HEK293T (cell line): ENCODE measurements at regions of chr5 and their contacts with region 1.

Region 1: GRCh38 chr5:147188200-147189108 is 46.4 kb upstream of the STK32A start:
- DNase-seq: peak; percentile 63

Region 2: DNA sequence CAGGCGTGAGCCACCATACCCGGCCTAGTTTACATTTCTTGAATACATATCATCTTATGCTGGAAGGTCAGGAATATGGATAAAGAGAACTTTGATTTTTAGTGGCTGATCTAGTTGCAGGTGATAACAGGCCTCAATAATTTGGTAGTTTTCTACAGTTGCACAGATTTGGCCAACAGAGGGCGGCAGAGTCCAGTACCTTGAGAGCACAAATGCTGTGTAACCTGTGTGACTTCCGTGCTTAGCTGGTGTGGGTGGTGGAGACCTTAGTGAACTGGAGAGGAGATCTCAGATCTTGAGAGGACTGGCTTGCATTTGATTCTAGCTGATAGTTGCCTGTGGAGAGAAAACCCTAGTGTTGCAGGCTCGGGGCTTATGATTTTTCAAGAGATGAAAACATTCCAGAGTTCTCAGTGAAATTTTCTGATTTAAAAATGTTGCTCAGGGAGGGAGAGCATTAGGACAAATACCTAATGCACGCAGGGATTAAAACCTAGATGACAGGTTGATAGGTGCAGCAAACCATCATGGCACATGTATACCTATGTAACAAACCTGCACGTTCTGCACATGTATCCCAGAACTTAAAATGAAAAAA is 655.1 kb before region 1 on chr5:
- CTCF ChIA-PET with region 1: interaction called, 12 read pairs
- POLR2A ChIA-PET with region 1: no interaction called
- DNase-seq: peak; percentile 72

Region 3: DNA sequence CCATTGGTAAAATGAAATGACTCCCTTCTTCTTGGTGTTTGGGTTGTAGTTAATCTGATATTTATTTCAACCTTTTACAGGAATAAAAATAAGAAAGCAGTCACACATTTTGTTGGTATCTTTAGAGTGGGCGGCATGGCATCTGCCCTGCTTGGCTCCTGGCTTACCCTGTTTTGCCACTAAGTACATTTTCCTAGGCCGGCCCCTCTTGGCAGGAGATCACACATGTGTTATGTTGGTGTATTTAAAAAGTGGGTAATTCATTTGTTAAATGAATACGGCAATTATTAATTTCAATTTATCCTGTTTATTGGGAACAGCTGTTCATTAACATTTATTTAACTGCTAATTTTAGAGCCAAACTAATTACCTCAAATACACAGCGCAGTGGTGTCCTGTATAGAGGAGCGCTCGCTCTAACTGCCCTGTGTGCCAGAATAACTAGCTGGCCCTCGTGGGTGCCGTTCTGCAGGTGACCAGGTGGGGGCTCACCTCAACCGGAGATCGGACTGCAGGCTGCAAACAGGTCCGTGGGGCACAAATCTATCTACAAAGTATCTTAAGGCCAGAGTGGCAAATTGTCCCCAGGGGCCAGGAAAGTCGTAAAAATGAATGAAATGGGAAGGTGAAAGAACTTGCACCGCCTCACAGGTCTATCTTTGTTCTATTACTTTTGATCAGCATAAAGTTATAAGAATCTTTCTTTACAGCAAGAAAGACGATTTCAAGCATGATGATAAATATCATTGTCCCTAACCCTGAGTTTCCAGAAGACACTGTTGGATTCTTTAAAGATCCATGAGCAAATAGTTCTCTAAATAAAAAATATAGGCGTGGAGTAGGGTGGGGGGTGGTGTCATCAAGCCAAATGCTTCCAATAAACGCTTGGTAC is 646.2 kb before region 1 on chr5:
- CTCF ChIA-PET with region 1: interaction called, 10 read pairs
- POLR2A ChIA-PET with region 1: no interaction called
- DNase-seq: peak; percentile 73

Region 4: GRCh38 chr5:146965761-146966659 is 222.4 kb before region 1 on chr5:
- CTCF ChIA-PET with region 1: interaction called, 16 read pairs
- POLR2A ChIA-PET with region 1: no interaction called
- DNase-seq: peak; percentile 68

Region 5: DNA sequence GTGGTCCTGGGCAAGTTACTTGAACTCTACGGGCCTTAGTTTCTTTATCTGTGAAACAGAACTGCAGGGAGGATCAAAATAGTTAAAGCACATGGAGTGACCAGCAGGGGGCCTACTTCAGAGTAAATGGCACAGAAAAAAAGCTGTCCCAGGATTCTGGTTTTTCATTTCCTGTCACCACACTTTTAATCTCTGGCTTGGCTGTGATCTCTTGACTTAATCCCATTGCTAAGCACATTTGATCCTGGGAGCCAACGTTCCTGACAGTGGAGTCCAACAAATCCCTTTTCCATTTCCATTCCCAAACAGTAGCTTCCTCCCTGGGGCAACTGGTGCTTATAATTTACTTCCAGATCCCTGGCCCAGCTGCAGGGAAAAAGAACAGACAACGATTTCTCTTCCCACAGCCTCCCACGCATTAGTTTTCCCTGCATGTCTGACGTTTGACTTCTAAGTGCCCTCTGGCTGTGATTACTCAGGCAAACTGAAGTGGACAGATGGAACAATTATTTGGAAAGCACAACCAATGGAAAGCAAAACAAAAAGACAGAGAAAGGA is 90.1 kb before region 1 on chr5:
- CTCF ChIA-PET with region 1: interaction called, 20 read pairs
- POLR2A ChIA-PET with region 1: no interaction called
- DNase-seq: peak; percentile 19

Region 6: DNA sequence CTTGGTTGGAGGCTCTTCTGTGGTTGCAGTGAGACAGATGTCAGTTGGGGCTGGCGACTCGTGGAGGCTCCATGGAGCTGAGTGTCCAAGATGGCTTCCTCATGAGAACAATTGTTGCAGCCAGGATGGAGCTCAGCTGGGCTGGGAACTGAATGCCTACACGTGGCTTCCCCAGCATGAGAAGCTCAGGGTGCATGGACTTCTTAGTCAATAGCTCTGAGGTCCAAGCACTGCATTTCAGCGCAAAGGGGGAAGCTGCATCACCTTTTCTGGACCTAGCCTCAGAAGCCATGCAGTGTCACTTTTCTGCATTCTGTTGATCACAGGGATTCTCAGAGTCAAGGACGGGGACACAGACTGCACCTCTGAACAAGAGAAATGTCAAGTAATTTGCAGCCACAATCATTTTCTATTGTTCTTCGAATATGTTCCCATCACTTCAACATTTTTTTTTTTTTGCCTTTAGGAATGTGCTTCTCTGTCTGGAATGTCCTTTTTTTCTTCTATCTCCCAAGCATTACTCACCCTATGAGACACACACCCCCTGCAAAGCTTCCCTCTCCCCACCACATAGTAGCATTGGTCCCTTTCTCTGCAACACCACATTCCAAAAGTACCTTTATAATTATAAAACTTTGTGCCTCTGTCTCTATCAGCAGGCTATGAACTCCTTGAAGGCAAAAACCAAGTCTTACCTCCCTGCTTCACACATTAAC is 11.2 kb before region 1 on chr5:
- CTCF ChIA-PET with region 1: interaction called, 16 read pairs
- POLR2A ChIA-PET with region 1: no interaction called
- DNase-seq: no peak

Region 7: DNA sequence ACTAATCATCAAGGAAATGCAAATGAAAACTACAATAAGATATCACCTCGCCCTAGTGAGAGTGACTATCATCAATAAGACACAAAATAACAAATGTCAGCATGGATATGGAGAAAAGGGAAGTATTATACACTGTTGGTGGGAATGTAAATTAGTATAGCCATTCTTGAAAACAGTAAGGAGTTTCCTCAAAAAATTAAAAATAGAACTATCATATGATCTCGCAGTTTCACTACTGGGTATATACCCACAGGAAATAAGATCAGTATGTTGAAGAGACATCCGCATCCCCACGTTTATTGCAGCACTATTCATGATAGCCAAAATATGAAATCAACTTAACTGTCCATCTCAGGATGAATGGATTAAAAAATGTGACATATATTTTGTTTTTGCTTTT is 14.8 kb after region 1 on chr5:
- CTCF ChIA-PET with region 1: interaction called, 17 read pairs
- POLR2A ChIA-PET with region 1: no interaction called
- DNase-seq: no peak